ENCODE measurements at regions of chr2 and their contacts with region 1.

Region 1: GRCh38 chr2:109510136-109511028 is 103.4 kb downstream of the SEPTIN10 start:
- DNase-seq: peak; percentile 57 to 89 (median 77)
- ATAC-seq: peak; percentile 72 to 91 (median 86)
- H3K4me3 ChIP-seq: no peak overlapping the region
- H3K27ac ChIP-seq: no peak overlapping the region
- H3K4me1 ChIP-seq: no peaks in the 10 kb centered on the region
- H3K27me3 ChIP-seq: no peaks in the 10 kb centered on the region
- CTCF ChIP-seq: peak; percentile 79 to 86 (median 84)

Region 2: GRCh38 chr2:109128048-109128465 is 382.3 kb before region 1 on chr2:
- intact Hi-C with region 1: loop called in 2 of 3 experiments (anchors 5 kb)
- DNase-seq: peak; percentile 46 to 82 (median 68)
- ATAC-seq: peak; percentile 66 to 86 (median 84)
- H3K4me3 ChIP-seq: peak overlapping the region; percentile 37 to 68 (median 48)
- H3K27ac ChIP-seq: peak overlapping the region in 2 of 4 donors; percentile 22 to 52
- H3K4me1 ChIP-seq: no peaks in the 10 kb centered on the region
- H3K27me3 ChIP-seq: no peaks in the 10 kb centered on the region
- CTCF ChIP-seq: peak; percentile 64 to 75 (median 71)

Measured in pancreas (tissue), 10 donors.